ENCODE measurements at regions of chr9 and their contacts with region 1.

Region 1: GRCh38 chr9:9730174-9730573 is 882.6 kb downstream of the PTPRD start:
- DNase-seq: no peak
- H3K4me3 ChIP-seq: no peak overlapping the region
- H3K27ac ChIP-seq: no peak overlapping the region
- H3K4me1 ChIP-seq: no peaks in the 10 kb centered on the region
- H3K27me3 ChIP-seq: no peaks in the 10 kb centered on the region
- CTCF ChIP-seq: no peak

Region 2: GRCh38 chr9:9631284-9631683 is 98.9 kb before region 1 on chr9:
- CTCF ChIA-PET with region 1: no interaction called
- dilution Hi-C with region 1: loop called (anchors 5 kb)
- in situ Hi-C with region 1: no loop called
- intact Hi-C with region 1: no loop called
- DNase-seq: no peak
- H3K4me3 ChIP-seq: no peak overlapping the region
- H3K27ac ChIP-seq: no peak overlapping the region
- H3K4me1 ChIP-seq: no peaks in the 10 kb centered on the region
- H3K27me3 ChIP-seq: no peaks in the 10 kb centered on the region
- CTCF ChIP-seq: no peak

Region 3: DNA sequence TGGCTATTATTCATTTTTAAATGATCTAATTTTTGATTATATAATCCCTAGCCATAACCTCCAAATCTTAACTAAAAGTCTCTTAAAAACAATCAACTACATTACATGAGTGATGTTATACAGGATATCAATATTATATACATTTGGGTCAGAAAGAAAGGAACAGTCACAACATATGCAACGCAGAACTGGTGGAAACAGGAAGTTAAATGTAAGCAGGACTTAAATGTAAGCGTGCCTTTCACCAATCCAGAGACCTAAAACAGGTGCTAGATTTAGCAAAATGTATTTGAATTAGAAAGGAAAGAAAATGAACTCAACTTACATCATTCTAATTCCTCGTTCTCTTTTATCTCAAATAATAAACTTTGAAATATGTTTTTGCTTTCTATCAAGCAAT is 144.1 kb after region 1 on chr9:
- CTCF ChIA-PET with region 1: no interaction called
- dilution Hi-C with region 1: no loop called
- in situ Hi-C with region 1: no loop called
- intact Hi-C with region 1: no loop called
- DNase-seq: no peak
- H3K4me3 ChIP-seq: no peak overlapping the region
- H3K27ac ChIP-seq: no peak overlapping the region
- H3K4me1 ChIP-seq: no peaks in the 10 kb centered on the region
- H3K27me3 ChIP-seq: no peaks in the 10 kb centered on the region
- CTCF ChIP-seq: no peak